Posterior cingulate gyrus (tissue), 11 donors: ENCODE measurements at regions of chr20 and their contacts with region 1.

Region 1: DNA sequence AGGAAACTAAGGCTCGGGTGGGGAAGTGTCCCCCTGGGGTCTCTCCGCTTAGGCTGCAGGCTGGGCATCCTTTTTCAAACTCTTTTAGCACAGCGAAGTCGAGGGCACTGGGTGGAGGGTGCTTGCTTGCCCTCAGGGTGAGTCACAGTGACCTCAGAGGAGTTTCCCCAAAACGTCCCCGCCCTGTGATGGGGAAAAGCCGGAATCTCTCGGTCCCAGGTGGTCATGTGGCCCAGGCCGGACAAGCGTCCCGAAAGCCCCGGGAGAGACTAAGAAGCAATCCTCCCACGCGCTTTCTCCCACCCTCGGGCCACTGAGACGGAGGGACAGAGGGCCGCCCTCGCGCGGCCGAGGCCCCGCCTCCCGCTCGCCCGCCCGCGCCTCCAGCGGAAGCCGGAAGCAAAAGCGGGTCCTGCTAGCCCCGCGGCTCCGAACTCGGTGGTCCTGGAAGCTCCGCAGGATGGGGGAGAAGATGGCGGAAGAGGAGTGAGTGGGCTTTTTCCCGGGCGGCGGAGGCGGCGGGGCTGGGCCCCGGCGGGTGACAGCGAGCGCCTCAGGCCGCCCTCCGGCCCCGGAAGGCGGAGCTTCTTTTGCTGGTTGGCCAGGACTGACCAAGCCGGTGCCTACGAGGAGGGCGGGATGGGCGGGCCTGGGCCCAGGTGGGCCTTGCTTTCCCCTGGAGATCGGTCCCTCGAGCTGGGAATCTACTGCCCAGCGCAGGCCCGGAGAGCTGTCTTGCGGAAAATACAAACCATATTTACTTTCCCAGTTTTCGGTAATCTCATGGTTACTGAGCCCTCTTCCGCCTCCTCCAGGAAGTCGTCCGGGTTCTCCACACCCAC is at the start of gene SLC9A8:
- DNase-seq: peak; percentile 75 to 99 (median 89)

Region 2: GRCh38 chr20:49768204-49769047 is 44.3 kb before region 1 on chr20:
- intact Hi-C with region 1: loop called (anchors 5 kb)
- DNase-seq: no peak

Region 3: DNA sequence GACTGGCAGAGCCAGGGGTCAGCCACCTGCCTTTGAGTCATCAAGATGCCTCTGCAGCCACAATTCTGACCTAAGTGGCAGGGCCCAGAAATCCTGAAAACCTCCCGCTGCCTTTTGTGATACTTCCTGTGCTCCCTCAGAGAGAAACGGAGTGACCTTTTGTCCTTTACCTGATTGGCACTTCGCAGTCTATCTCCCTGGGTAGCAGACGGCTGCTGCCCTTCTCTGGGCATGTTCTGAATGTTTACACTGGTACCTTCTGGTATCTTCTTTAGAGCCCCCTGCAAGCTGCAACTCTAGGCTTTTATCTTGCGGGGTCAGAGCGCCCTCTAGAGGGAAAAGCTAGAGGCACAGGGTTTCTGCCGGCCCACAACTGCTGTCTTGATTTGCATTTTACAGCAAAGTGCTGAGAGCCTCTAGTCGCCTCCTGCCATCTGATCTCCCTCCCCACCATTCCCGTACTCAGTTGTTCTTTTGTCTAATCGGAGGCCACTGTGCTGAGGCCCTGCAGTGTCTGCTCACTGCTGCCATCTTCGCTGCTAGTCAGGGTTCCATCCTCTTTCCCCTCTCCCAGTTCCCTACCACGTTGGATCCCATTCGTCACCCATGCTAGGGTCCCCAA is 75.8 kb after region 1 on chr20:
- intact Hi-C with region 1: loop called (anchors 2 kb)
- DNase-seq: peak; percentile 66 to 98 (median 84)

Region 4: DNA sequence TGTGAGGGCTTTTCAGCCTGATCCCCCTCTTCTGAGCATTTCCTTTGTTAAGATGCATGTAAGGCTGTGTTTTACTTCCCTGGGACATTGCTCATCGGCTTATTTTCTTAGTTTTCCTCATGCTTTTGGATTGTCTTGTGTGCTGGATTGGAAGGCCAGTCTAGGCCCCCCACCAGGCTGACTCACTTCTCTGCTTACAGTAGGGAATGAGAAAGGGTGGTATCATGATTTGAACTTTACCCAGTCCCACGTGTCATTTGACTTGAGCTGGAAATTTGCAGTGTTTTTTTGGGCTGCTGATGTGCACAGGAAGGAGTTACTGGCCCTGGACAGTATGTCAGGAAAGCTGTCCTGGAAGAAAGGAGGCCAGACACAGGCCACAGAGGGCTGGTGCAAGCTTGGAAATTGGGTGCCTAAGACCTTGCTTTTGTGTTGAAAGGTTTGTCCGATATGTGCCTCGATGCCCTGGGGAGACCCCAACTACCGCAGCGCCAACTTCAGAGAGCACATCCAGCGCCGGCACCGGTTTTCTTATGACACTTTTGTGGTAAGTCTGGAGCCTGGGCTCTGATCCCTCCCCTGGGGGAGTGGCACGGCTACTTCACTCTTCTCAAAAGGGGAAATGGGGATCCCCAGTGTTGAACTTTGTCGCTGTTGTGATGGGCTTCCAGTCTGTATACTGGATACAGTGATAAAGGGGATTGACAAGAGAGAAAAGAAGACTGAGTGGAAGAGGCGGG is 136.3 kb after region 1 on chr20:
- intact Hi-C with region 1: no loop called
- DNase-seq: peak in 1 of 10 donors; percentile 42